Naive thymus-derived CD4-positive, alpha-beta T cell (primary cell): ENCODE measurements at regions of chr17 and their contacts with region 1.

Region 1: DNA sequence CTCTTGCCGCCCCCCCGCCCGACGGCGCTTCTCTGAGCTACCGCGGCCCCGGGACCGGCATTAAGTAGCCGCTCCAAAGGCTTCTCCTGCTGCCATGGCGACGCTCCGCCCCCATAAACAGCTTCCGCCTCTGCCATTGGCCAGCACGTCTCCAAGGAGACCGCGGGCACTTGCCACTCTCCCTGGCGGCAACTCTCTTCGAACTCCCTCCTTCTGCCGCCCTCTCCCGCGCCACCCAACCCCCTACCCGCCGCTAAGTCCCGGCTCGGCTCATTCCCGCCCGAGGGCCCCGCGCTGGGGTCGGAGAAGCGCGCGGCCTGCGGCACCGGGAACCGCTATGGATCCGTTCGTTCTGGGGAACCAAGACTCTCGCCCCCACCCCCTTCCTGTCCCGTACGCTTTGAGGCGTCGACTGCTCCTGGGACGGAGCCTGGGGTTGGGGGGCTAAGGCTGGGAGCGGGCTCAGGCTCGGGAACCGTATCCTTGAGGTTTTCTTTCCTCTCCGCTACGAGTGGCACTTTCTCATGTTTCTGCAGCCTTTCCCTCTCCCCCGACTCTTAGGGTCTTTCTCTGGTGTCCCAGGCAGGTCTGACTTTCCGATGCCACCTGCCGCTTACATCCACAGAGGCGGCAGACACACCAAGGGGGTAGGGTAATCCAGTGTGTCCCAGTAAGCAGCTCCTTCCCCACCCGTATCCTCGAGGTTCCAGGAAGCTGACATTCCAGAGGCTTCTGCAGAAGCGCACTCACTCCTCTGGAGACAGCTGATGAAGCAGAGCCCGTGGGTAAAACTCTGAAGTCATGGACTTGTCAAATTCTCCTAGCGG is at the start of gene FOXJ1:
- DNase-seq: peak; percentile 88 to 94 (median 91)
- ATAC-seq: peak; percentile 87
- H3K4me3 ChIP-seq: peak within 1 kb of the TSS; percentile 49
- H3K4me3 Mint-ChIP-seq: peak within 1 kb of the TSS; percentile 82 to 89 (median 85)
- H3K27ac ChIP-seq: peak within 1 kb of the TSS; percentile 61
- H3K27ac Mint-ChIP-seq: peak within 1 kb of the TSS; percentile 80 to 99 (median 93)
- H3K4me1 ChIP-seq: peaks cover 50 to 58% of the 10 kb centered on the region in 2 donors
- H3K4me1 Mint-ChIP-seq: peaks cover 42 to 63% (median 59%) of the 10 kb centered on the region in 7 donors
- H3K27me3 ChIP-seq: no peaks in the 10 kb centered on the region
- H3K27me3 Mint-ChIP-seq: peaks cover 0 to 26% (median 0%) of the 10 kb centered on the region in 5 donors
- total RNA-seq, gene FOXJ1: 0.29 to 2.2 (median 1.4) TPM

Region 2: DNA sequence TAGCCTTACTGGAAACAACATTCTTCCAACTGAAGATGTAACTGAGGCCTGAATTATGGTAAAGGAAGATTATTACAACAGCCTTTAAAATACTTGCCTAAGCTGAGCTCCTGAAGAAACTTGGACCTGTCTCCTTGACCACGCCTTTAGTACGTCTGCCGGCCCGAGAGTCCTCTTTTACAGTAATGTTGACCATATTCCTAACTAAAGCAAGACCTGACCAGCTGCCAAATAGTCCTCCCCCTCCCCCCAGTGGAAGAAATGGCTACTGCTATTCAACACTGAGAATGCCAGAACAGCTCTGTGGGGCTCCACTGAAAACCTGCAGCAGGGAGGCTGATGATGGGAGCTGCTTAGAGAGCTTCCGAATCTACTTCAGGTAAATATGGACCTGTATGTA is 12.2 kb after region 1 on chr17:
- CTCF ChIA-PET with region 1: interaction called, 13 read pairs
- POLR2A ChIA-PET with region 1: interaction called, 90 read pairs
- intact Hi-C with region 1: loop called in 1 of 2 experiments (anchors 1 kb)
- DNase-seq: no peak
- ATAC-seq: no peak
- H3K4me3 ChIP-seq: no peak overlapping the region
- H3K4me3 Mint-ChIP-seq: peak overlapping the region in 7 of 10 donors; percentile 11 to 81 (median 30)
- H3K27ac ChIP-seq: peak overlapping the region; percentile 52
- H3K27ac Mint-ChIP-seq: peak overlapping the region in 8 of 9 donors; percentile 93 to 99 (median 98)
- H3K4me1 ChIP-seq: peaks cover 13 to 48% of the 10 kb centered on the region in 2 donors
- H3K4me1 Mint-ChIP-seq: peaks cover 24 to 73% (median 64%) of the 10 kb centered on the region in 7 donors
- H3K27me3 ChIP-seq: no peaks in the 10 kb centered on the region
- H3K27me3 Mint-ChIP-seq: no peaks in the 10 kb centered on the region

Region 3: DNA sequence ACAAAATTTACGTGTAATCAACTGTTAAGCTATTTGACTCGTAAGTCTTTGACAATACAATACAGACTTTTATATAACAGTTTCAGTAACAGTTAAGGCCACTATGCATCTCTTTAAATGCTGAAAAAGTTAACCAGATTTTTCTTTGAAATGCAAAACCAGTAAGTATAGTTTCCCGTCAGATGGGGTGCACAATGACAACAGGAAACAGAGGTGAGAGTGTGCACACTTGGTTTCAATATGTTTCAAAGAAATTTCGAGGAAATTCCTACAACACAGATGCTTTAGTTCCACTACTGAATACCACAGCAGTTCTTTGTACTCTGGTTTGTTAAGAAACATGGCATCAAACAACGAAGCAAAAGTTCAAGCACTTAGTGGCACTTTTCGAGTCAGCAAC is 50.5 kb after region 1 on chr17:
- CTCF ChIA-PET with region 1: interaction called, 4 read pairs
- POLR2A ChIA-PET with region 1: interaction called, 13 read pairs
- intact Hi-C with region 1: no loop called
- DNase-seq: peak in 7 of 9 donors; percentile 72 to 94 (median 89)
- ATAC-seq: peak; percentile 96
- H3K4me3 ChIP-seq: peak overlapping the region; percentile 42
- H3K4me3 Mint-ChIP-seq: peak overlapping the region; percentile 55 to 87 (median 73)
- H3K27ac ChIP-seq: peak overlapping the region; percentile 79
- H3K27ac Mint-ChIP-seq: peak overlapping the region; percentile 90 to 99 (median 96)
- H3K4me1 ChIP-seq: peaks cover 61 to 84% of the 10 kb centered on the region in 2 donors
- H3K4me1 Mint-ChIP-seq: peaks cover 46 to 87% (median 79%) of the 10 kb centered on the region in 7 donors
- H3K27me3 ChIP-seq: no peaks in the 10 kb centered on the region
- H3K27me3 Mint-ChIP-seq: no peaks in the 10 kb centered on the region

Region 4: DNA sequence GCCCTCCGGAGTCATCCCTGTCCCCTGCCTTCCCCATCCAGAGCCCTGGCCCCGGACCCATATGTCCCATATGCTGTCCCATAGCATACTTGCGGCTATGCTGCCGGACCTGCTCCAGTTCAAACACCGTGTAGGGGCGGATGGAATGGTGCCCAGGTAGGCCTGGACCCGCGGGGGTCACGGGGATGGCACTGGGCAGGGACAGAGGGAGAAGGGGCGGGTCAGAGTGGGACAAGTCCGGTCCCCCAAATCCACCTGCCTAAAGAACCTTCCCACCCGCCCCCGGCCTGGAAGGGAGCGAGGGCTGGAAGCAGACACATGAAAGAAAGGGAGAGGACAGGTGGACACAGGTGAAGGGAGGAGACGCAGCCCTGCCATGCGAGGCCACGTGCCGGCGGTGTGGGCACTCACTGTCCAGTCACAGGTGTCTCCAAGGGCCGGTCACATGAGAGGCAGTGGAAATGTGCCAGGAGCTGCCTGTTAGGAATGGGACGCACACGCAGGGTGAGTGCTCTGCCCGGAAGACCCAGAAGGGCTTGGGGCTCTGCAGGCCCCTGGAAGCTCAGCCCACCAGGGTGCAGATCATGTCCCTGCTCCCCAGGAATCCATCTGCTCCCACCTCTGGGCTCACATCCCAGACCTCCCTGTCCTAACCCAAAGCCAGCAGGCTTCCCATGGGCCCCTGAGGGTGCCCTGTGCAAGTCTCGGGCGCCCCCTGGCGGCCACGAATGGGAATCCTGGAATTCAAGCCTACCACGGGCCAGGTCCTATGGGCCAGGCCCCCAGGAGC is 137.7 kb after region 1 on chr17:
- CTCF ChIA-PET with region 1: interaction called, 19 read pairs
- POLR2A ChIA-PET with region 1: interaction called, 11 read pairs
- intact Hi-C with region 1: no loop called
- DNase-seq: peak; percentile 69 to 89 (median 81)
- ATAC-seq: peak; percentile 87
- H3K4me3 ChIP-seq: no peak overlapping the region
- H3K4me3 Mint-ChIP-seq: no peak overlapping the region
- H3K27ac ChIP-seq: no peak overlapping the region
- H3K27ac Mint-ChIP-seq: peak overlapping the region in 7 of 9 donors; percentile 22 to 74 (median 46)
- H3K4me1 ChIP-seq: peaks cover 5 to 17% of the 10 kb centered on the region in 2 donors
- H3K4me1 Mint-ChIP-seq: peaks cover 7 to 29% (median 27%) of the 10 kb centered on the region in 7 donors
- H3K27me3 ChIP-seq: no peaks in the 10 kb centered on the region
- H3K27me3 Mint-ChIP-seq: no peaks in the 10 kb centered on the region

Region 5: GRCh38 chr17:76671123-76671911 is 529.9 kb after region 1 on chr17:
- CTCF ChIA-PET with region 1: no interaction called
- POLR2A ChIA-PET with region 1: no interaction called
- intact Hi-C with region 1: loop called in 1 of 2 experiments (anchors 10 kb)
- DNase-seq: peak; percentile 90 to 99 (median 98)
- ATAC-seq: peak; percentile 99
- H3K4me3 ChIP-seq: peak overlapping the region; percentile 76
- H3K4me3 Mint-ChIP-seq: peak overlapping the region; percentile 81 to 98 (median 92)
- H3K27ac ChIP-seq: peak overlapping the region; percentile 84
- H3K27ac Mint-ChIP-seq: peak overlapping the region; percentile 88 to 99 (median 96)
- H3K4me1 ChIP-seq: peaks cover 19 to 26% of the 10 kb centered on the region in 2 donors
- H3K4me1 Mint-ChIP-seq: peaks cover 20 to 43% (median 31%) of the 10 kb centered on the region in 7 donors
- H3K27me3 ChIP-seq: no peaks in the 10 kb centered on the region
- H3K27me3 Mint-ChIP-seq: peaks cover 0 to 10% (median 0%) of the 10 kb centered on the region in 5 donors